Colonic mucosa (tissue), 4 donors: ENCODE measurements at regions of chr3 and their contacts with region 1.

Region 1: DNA sequence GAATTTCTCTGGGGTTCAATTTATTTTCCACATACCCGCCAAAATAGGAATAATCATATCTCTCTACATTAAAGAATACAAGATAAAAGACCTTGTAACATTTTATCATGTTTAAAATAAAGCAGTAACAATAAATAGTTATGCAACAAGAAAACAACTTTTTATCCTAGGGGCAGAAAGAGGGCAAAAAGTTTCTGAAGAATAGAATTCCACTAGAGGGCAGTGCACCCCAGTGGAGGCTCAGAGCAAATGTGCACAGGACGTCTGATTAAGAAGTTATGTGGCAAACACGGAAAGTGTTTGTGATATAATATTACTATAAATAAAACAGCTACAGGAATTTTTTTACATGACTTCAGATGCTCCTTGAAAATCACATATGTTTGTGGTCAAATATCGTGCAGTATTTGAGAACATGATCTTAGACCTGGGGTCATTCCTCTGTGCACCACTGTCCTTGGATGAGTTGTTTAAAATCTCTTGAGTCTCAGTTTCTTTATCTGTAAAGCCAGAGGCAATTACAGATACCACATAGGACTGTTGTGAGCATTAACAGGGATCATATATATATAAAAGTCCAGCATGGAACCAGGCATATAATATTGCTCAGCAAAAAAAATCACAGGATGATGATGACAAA is 13.2 kb upstream of the PIK3R4 start:
- DNase-seq: peak; percentile 73
- H3K4me3 ChIP-seq: no peak overlapping the region
- H3K27ac ChIP-seq: no peak overlapping the region
- H3K4me1 ChIP-seq: no peaks in the 10 kb centered on the region
- H3K27me3 ChIP-seq: no peaks in the 10 kb centered on the region
- CTCF ChIP-seq: peak; percentile 85

Region 2: GRCh38 chr3:130892759-130893375 is 133.0 kb after region 1 on chr3:
- intact Hi-C with region 1: loop called (anchors 5 kb)
- DNase-seq: peak; percentile 86
- H3K4me3 ChIP-seq: peak overlapping the region; percentile 83
- H3K27ac ChIP-seq: peak overlapping the region; percentile 96
- H3K4me1 ChIP-seq: no peaks in the 10 kb centered on the region
- H3K27me3 ChIP-seq: no peaks in the 10 kb centered on the region
- CTCF ChIP-seq: peak; percentile 76

Region 3: DNA sequence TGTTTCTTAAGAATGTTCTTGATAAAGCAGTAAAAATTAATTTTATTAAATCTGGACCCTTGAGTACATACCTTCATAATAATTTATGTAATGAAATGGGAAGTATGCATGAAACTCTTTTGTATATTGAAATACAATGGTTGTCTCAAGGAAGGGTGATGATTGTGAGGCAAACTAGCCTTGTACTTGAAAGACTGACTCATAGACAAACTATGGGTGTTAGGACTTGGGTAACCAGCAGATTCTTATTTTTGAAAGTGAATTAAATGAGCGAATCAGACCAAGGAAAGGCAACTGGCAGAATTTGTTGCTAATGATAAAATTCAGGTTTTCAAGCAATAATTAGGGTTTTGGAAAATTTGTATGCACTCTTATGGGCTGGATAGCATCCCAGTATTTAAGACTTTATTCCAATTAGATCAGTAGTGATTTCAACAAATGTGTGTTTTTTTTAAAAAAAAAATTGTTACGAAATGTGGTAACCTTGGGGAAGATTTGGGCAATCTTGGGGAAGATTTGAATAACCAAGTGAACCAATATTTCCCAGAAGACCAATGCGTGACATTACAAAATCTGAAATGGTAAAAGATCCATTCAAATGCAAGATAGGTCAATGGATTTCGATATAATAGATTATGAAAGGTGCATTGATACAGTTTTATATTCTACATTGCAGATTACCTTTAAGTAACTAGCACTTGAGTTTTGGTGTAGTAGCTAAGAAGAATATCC is 176.1 kb after region 1 on chr3:
- intact Hi-C with region 1: no loop called
- DNase-seq: no peak
- H3K4me3 ChIP-seq: no peak overlapping the region
- H3K27ac ChIP-seq: no peak overlapping the region
- H3K4me1 ChIP-seq: no peaks in the 10 kb centered on the region
- H3K27me3 ChIP-seq: no peaks in the 10 kb centered on the region
- CTCF ChIP-seq: no peak

Region 4: GRCh38 chr3:131007782-131008181 is 248.0 kb after region 1 on chr3:
- intact Hi-C with region 1: loop called (anchors 10 kb)
- DNase-seq: no peak
- H3K4me3 ChIP-seq: no peak overlapping the region
- H3K27ac ChIP-seq: no peak overlapping the region
- H3K4me1 ChIP-seq: no peaks in the 10 kb centered on the region
- H3K27me3 ChIP-seq: no peaks in the 10 kb centered on the region
- CTCF ChIP-seq: no peak